Sciatic nerve (tissue), 2 donors: ENCODE measurements at regions of chr4 and their contacts with region 1.

Region 1: DNA sequence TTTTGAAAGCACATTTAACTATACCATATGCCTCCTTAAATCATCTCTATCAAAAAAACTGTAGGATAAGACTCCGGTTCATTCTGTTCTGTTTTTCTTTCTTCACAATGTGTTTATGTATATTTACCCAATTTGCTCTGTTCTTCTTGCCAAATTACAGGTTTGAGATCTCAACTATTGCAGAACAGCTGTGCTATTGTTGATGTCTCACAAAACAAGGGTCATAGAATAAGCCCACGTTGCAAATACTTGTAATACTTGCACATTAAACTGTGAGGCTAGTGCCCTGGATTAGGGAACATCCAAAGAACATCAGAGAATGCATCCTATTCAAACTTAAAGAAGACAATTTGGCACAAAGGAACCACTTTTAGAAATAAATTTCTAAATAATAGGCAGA is 45.4 kb downstream of the ANTXR2 start:
- DNase-seq: no peak
- ATAC-seq: no peak

Region 2: GRCh38 chr4:80017125-80017854 is 10.3 kb before region 1 on chr4:
- intact Hi-C with region 1: loop called (anchors 1 kb)
- DNase-seq: no peak
- ATAC-seq: peak; percentile 83

Region 3: GRCh38 chr4:80434238-80434637 is 406.6 kb after region 1 on chr4:
- intact Hi-C with region 1: no loop called
- DNase-seq: no peak
- ATAC-seq: no peak